ENCODE measurements at regions of chr13 and their contacts with region 1.

Region 1: DNA sequence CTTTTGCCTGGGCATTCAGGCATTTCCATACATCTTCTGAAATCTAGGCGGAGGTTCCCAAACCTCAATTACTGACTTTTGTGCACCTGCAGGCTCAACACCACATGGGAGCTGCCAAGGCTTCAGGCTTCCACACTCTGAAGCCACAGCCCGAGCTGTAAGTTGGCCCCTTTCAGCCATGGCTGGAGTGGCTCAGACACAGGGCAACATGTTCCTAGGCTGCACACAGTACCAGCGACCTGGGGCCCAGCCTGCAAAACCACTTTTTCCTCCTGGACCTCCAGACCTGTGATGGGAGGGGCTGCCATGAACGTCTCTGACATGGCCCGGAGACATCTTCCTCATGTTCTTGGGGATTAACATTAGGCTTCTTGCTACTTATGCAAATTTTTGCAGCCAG is 1558.2 kb upstream of the PCDH20 start:
- DNase-seq: no peak
- ATAC-seq: no peak

Region 2: GRCh38 chr13:63075126-63075525 is 101.3 kb after region 1 on chr13:
- intact Hi-C with region 1: loop called (anchors 10 kb)
- DNase-seq: no peak
- ATAC-seq: no peak